RWPE1 (cell line): ENCODE measurements at regions of chr1 and their contacts with region 1.

Region 1: DNA sequence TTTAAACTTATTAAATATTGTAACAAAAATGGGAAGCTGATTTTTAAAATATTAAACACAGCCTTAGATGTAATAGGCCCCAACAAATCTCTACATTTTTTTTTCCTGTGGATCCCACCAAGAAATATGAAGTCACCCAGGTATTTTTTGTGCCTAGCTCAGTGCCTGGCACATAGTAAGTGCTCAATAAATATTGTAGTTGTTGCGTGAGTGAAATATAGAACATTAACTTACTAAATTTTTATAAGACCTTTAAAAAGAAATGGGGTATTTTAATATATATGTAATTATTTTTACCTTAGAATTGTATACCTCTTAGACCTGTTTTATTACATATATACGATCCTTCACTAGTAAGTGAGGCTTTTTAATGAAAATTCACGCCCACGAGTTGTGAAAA is 569 bp upstream of the DNAH14 start:
- DNase-seq: no peak
- H3K27ac ChIP-seq: no peak overlapping the region
- CTCF ChIP-seq: no peak

Region 2: GRCh38 chr1:224867715-224868114 is 61.2 kb before region 1 on chr1:
- CTCF ChIA-PET with region 1: no interaction called
- POLR2A ChIA-PET with region 1: interaction called, 10 read pairs
- DNase-seq: no peak
- H3K27ac ChIP-seq: no peak overlapping the region
- CTCF ChIP-seq: no peak

Region 3: DNA sequence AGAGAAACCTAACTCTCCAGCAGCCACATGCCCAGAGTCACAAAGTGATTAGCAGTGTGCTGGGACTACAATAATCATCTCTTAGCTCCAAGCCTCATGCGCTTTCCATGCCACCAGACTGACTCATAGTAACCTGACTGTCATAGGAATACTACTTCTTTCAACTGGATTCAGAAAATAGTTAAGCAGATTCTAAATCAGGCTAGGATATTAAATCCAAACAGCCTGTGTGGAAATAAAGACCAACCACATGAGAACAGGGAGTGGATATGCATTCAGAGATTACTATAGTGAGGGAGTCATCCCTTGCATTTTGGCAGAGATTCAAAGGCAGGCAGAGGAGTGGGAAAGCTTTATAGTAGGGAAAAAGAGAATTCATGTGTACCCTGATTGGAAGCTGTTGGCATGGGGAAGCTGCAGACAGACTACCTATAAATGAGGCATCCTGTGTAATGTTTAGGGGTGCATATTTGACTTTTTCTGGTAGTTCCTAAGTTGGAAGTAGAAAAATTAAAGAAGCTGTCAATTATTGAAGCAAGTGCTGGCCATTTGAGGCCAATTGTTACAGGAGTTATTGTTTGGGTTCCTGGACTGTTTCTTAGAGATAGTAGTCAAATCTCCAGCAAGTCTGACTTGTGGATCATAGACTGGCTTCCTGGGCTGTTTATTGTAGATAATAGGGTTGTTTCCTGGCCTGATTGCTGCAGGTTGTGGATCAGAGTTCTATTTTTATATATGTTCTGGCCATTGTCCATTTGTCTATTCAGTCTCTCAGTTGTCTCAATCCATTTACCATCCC is 31.2 kb before region 1 on chr1:
- CTCF ChIA-PET with region 1: no interaction called
- POLR2A ChIA-PET with region 1: no interaction called
- DNase-seq: no peak
- H3K27ac ChIP-seq: no peak overlapping the region
- CTCF ChIP-seq: no peak

Region 4: GRCh38 chr1:224939844-224940425 is 11.0 kb after region 1 on chr1:
- CTCF ChIA-PET with region 1: no interaction called
- POLR2A ChIA-PET with region 1: no interaction called
- DNase-seq: no peak
- H3K27ac ChIP-seq: no peak overlapping the region
- CTCF ChIP-seq: no peak